ENCODE measurements at regions of chr1 and their contacts with region 1.

Region 1: DNA sequence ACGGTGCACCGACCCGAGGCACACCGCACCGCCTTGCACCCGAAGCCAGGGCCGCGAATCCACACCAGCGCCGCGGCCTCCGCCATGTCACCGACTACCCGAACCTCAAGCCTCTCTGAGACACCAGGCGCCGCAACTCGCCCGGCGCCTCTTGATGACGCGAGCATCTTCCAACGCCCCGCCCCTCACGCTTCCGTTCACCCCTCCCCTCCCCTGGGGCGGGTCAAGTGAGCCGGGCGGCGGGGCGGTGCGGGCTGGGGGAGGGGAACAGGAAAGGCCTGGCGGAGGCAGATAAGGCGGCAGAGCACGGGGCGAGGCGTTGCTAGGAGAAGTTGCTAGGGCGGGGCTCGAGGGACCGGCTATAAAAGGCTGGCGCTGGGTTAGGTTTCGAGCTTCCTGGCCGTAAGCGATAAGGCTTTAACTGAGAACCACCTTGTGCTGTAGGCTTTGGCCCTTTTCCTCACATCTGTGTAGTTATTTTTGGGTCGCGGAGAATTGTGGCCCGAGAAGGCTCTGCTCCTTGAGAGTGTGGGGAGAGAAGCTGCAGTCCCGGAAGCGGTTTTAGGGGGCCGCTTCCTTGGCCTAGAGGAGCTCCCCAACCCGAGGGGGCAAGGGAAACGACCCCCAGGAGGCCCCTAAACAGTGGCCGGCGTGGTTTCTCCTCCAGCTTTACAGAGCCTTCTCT is at the start of gene SDE2:
- DNase-seq: peak; percentile 100
- ATAC-seq: peak; percentile 96 to 98 (median 97)
- H3K4me3 ChIP-seq: peak within 1 kb of the TSS; percentile 77 to 94 (median 86)
- H3K27ac ChIP-seq: peak within 1 kb of the TSS; percentile 84 to 99 (median 96)
- H3K4me1 ChIP-seq: peaks cover 4 to 70% (median 45%) of the 10 kb centered on the region in 12 donors
- H3K27me3 ChIP-seq: no peaks in the 10 kb centered on the region
- CTCF ChIP-seq: peak in 2 of 12 donors; percentile 17 to 40
- POLR2A ChIP-seq: peak; percentile 24 to 95
- total RNA-seq, gene SDE2: 9.3 to 16.4 (median 12.6) TPM

Region 2: DNA sequence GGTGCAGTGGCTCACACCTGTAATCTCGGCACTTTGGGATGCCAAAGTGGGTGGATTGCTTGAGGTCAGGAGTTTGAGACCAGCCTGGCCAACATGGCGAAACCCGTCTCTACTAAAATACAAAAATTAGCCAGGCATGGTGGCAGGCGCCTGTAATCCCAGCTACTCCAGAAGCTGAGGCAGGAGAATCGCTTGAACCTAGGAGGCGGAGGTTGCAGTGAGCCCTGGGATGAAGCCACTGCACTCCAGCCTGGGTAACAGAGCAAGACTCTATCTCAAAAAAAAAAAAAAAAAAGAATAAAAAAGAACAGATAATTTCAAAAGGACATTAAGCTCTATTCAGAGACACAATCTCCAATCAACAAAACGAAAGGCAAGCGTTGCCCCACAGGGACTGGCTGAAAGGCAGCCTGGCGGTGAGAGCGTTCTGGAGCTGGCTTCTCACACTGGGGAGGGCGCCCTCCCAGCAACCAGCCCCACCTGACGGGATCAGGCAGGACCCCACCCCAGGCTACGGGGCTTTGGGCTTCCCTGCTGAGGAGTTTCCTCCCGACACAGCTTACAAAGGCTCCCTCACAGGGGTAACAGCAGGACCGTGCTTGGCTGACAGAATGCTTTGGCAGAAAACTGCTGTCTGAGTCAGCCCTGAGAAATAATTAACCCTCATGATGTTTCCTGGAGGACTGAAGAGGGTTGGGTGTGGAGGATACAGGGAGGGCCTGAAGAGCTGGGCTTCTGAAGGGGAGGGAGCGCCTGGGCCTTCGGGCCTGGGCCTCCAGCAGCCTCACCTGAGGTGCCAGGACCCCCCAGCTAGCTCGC is 252.8 kb before region 1 on chr1:
- intact Hi-C with region 1: no loop called
- DNase-seq: peak; percentile 78 to 85 (median 83)
- ATAC-seq: peak; percentile 91 to 98 (median 97)
- H3K4me3 ChIP-seq: peak overlapping the region in 11 of 12 donors; percentile 3 to 60 (median 48)
- H3K27ac ChIP-seq: peak overlapping the region; percentile 78 to 96 (median 88)
- H3K4me1 ChIP-seq: peaks cover 2 to 48% (median 27%) of the 10 kb centered on the region in 12 donors
- H3K27me3 ChIP-seq: no peaks in the 10 kb centered on the region
- CTCF ChIP-seq: peak in 6 of 12 donors; percentile 13 to 33 (median 28)
- POLR2A ChIP-seq: no peak

Region 3: DNA sequence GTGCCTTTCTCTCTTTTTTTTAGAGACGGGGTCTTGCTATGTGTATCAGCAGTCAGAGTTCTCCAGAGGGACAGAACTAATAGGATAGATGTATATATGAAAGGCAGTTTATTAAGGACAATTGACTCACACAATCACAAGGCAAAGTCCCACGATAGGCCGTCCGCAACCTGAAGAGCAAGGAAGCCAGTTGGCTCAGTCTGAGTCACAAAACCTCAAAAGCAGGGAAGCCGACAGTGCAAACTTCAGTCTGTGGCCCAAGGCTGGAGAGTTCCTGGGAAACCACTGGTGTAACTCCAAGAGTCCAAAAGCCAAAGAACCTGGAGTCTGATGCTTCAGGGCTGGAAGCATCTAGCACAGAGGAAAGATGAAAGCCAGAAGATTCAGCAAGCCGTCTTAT is 46.9 kb after region 1 on chr1:
- intact Hi-C with region 1: no loop called
- DNase-seq: no peak
- ATAC-seq: no peak
- H3K4me3 ChIP-seq: no peak overlapping the region
- H3K27ac ChIP-seq: no peak overlapping the region
- H3K4me1 ChIP-seq: peaks cover 0 to 40% (median 0%) of the 10 kb centered on the region in 12 donors
- H3K27me3 ChIP-seq: no peaks in the 10 kb centered on the region
- CTCF ChIP-seq: no peak
- POLR2A ChIP-seq: no peak

Region 4: GRCh38 chr1:226109829-226110248 is 110.5 kb after region 1 on chr1:
- intact Hi-C with region 1: loop called in 7 of 10 experiments (anchors 2 to 10 kb)
- DNase-seq: peak; percentile 93 to 95 (median 93)
- ATAC-seq: peak; percentile 86 to 89 (median 86)
- H3K4me3 ChIP-seq: peak overlapping the region; percentile 60 to 87 (median 69)
- H3K27ac ChIP-seq: peak overlapping the region; percentile 94 to 100 (median 100)
- H3K4me1 ChIP-seq: peaks cover 0 to 38% (median 33%) of the 10 kb centered on the region in 12 donors
- H3K27me3 ChIP-seq: no peaks in the 10 kb centered on the region
- CTCF ChIP-seq: peak in 7 of 12 donors; percentile 9 to 36 (median 22)
- POLR2A ChIP-seq: no peak

Region 5: GRCh38 chr1:226325178-226325577 is 325.8 kb after region 1 on chr1:
- intact Hi-C with region 1: no loop called
- DNase-seq: no peak
- ATAC-seq: no peak
- H3K4me3 ChIP-seq: no peak overlapping the region
- H3K27ac ChIP-seq: no peak overlapping the region
- H3K4me1 ChIP-seq: no peaks in the 10 kb centered on the region
- H3K27me3 ChIP-seq: peaks cover 0 to 8% (median 0%) of the 10 kb centered on the region in 9 donors
- CTCF ChIP-seq: no peak
- POLR2A ChIP-seq: no peak